ENCODE measurements at regions of chr9 and their contacts with region 1.

Region 1: GRCh38 chr9:131237931-131238401 is 38.3 kb downstream of the FAM78A start:
- DNase-seq: peak; percentile 84 to 89 (median 85)
- H3K4me3 ChIP-seq: peak overlapping the region in 1 of 2 donors; percentile 34
- H3K4me3 Mint-ChIP-seq: peak overlapping the region; percentile 77 to 87 (median 83)
- H3K27ac ChIP-seq: peak overlapping the region; percentile 42
- H3K27ac Mint-ChIP-seq: peak overlapping the region; percentile 84 to 98 (median 96)
- H3K4me1 ChIP-seq: peaks cover 65% of the 10 kb centered on the region
- H3K4me1 Mint-ChIP-seq: peaks cover 32 to 68% (median 49%) of the 10 kb centered on the region in 4 donors
- H3K27me3 ChIP-seq: no peaks in the 10 kb centered on the region
- H3K27me3 Mint-ChIP-seq: no peaks in the 10 kb centered on the region

Region 2: GRCh38 chr9:131270171-131271015 is 32.4 kb after region 1 on chr9:
- CTCF ChIA-PET with region 1: interaction called, 4 read pairs
- POLR2A ChIA-PET with region 1: interaction called, 237 read pairs
- intact Hi-C with region 1: loop called (anchors 2 kb)
- DNase-seq: peak; percentile 49 to 76 (median 55)
- H3K4me3 ChIP-seq: peak overlapping the region; percentile 31 to 91
- H3K4me3 Mint-ChIP-seq: peak overlapping the region; percentile 96 to 100 (median 99)
- H3K27ac ChIP-seq: peak overlapping the region; percentile 72
- H3K27ac Mint-ChIP-seq: peak overlapping the region; percentile 93 to 99 (median 96)
- H3K4me1 ChIP-seq: peaks cover 63% of the 10 kb centered on the region
- H3K4me1 Mint-ChIP-seq: peaks cover 39 to 84% (median 52%) of the 10 kb centered on the region in 4 donors
- H3K27me3 ChIP-seq: no peaks in the 10 kb centered on the region
- H3K27me3 Mint-ChIP-seq: no peaks in the 10 kb centered on the region

Region 3: DNA sequence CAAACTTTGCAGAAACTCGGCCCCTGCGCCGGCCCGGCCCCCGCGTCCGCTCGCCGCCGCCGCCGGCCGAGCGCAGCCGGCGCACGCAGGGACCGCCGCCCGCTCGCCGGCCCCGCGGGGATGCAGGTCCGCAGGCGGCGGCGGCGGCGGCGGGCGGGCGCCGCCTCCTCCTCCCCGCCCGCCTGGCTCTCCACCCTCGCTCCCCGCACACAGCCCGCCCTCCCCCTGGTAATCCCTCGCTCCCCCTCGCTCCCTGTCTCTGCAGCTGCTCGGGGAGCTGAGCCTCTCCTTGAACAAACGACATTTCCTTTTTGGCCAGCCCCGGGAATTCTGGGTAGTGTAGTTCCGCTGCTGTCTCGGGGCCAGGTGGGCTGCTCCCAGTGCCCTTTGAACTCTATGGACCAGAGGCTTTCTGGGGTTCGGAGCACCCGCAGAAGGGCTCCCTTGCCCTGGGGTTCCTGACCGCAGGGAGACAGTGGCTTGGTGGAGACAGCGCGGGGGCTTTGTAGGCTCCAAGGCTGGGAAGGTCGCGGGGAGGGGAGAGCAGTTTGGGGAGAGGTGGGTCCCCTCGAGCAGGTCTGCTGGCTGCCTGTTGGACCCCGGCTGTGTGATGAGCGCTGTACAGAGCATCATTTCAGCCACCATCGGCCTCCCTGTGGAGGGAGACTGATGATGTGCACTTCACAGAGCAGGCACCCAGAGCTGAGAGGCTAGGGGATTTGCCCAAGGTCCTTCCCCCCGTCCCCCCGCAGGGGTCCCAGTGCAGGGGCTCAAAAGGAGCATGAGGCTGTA is 40.1 kb after region 1 on chr9:
- CTCF ChIA-PET with region 1: interaction called, 4 read pairs
- POLR2A ChIA-PET with region 1: interaction called, 237 read pairs
- intact Hi-C with region 1: loop called (anchors 1 kb)
- DNase-seq: peak; percentile 60 to 78 (median 61)
- H3K4me3 ChIP-seq: peak overlapping the region; percentile 21 to 65
- H3K4me3 Mint-ChIP-seq: peak overlapping the region; percentile 84 to 93 (median 91)
- H3K27ac ChIP-seq: peak overlapping the region; percentile 79
- H3K27ac Mint-ChIP-seq: peak overlapping the region; percentile 92 to 95 (median 94)
- H3K4me1 ChIP-seq: peaks cover 27% of the 10 kb centered on the region
- H3K4me1 Mint-ChIP-seq: peaks cover 22 to 49% (median 25%) of the 10 kb centered on the region in 4 donors
- H3K27me3 ChIP-seq: no peaks in the 10 kb centered on the region
- H3K27me3 Mint-ChIP-seq: peaks cover 2 to 3% of the 10 kb centered on the region in 2 donors